ENCODE measurements at regions of chr2 and their contacts with region 1.

Region 1: DNA sequence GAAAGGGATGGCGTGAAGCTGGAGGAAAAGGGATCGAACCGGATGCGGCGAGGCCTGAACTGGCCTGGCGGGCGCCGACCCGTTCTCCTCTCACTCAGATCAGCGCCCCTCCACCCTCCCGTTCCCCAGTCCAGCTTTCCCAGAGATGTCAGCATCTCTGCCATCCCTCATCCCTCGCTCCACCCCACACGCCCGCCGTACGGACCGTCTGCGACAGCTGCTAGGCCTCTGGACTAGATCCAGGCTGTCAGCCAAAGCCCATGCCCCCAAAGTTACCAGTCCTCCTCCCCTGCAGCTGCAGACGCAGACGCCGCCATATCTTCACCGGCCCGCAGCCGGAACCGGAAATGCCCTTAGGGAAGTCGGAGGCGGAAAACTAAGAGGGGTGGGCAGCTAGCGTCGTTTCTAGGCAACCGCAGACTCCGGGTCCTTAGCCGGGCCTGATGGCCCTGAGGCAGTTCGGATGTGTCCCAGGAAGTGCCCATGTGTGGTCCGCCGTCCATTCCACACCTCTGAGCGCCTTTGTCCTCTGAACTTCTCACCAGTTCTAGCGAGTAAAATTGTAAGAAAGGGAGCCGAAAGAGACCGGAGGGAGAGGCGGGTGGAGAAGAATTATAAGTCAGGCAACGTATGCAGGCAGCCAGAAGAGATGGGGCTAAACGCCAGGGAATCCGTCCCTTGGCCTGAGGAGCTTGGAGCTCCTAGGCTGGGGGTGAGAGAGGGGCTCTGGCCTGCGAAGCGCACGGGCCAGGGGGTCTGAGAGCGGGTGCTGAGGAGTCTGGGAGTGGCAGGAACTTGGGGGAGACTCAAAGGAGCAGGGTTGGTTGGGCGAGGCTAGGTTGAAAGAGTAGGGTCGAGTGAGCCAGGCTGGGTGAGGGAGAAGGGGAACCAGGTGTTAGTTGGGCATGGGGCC is at the starts of genes RNF25 and STK36:
- DNase-seq: peak; percentile 91
- ATAC-seq: peak; percentile 91
- H3K4me3 ChIP-seq: peak within 1 kb of the TSS; percentile 81
- H3K27ac ChIP-seq: peak within 1 kb of the TSS; percentile 47
- H3K4me1 ChIP-seq: peaks cover 12% of the 10 kb centered on the region
- H3K27me3 ChIP-seq: no peaks in the 10 kb centered on the region
- CTCF ChIP-seq: no peak
- total RNA-seq, gene RNF25: 35.1 and 42.4 TPM in 2 replicates
- total RNA-seq, gene STK36: 32.9 and 48.2 TPM in 2 replicates

Region 2: DNA sequence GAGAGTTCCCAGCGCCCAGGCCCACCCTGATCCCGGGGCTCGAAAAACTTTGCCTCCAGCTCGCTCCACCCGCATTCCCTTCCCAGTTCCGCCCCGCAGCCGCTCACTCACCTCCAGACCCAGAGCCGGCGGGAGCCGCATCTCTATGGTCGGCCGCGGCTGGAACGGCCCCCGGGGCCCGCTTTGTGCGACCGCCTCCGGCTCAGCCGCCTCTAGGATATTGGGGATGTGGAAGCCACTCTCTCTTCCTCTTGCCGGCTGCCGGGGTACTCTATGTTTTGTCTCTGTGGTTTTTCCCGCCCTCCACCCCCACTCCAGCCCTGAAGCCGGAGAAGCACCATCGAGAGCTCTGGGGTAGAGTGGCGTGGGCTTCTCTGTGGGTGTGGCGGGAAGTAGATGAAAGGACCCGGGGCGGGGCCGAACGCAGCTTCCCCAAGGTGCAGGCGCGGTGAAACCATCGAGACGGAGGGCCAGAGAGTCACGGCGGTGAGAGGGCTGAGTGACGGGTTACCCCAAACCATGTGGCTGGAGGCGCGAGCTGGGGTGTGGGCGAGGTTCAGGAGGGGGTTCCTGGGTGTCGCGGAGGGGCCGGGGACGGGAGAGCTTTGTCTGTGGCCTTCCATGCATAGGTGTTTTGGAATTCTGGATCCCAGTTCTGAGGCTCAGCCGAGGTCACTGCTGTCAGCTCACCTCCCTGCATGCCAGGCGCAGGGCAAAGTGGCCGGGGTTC is 12.5 kb before region 1 on chr2 and contains the starts of genes BCS1L and ZNF142:
- CTCF ChIA-PET with region 1: interaction called, 4 read pairs
- POLR2A ChIA-PET with region 1: interaction called, 36 read pairs
- intact Hi-C with region 1: loop called (anchors 1 kb)
- DNase-seq: peak; percentile 91
- ATAC-seq: peak; percentile 92
- H3K4me3 ChIP-seq: peak within 1 kb of the TSS; percentile 100
- H3K27ac ChIP-seq: peak within 1 kb of the TSS; percentile 61
- H3K4me1 ChIP-seq: peaks cover 20% of the 10 kb centered on the region
- H3K27me3 ChIP-seq: no peaks in the 10 kb centered on the region
- CTCF ChIP-seq: no peak
- total RNA-seq, gene BCS1L: 41.3 and 48.5 TPM in 2 replicates
- total RNA-seq, gene ZNF142: 35.5 and 36.3 TPM in 2 replicates

Region 3: DNA sequence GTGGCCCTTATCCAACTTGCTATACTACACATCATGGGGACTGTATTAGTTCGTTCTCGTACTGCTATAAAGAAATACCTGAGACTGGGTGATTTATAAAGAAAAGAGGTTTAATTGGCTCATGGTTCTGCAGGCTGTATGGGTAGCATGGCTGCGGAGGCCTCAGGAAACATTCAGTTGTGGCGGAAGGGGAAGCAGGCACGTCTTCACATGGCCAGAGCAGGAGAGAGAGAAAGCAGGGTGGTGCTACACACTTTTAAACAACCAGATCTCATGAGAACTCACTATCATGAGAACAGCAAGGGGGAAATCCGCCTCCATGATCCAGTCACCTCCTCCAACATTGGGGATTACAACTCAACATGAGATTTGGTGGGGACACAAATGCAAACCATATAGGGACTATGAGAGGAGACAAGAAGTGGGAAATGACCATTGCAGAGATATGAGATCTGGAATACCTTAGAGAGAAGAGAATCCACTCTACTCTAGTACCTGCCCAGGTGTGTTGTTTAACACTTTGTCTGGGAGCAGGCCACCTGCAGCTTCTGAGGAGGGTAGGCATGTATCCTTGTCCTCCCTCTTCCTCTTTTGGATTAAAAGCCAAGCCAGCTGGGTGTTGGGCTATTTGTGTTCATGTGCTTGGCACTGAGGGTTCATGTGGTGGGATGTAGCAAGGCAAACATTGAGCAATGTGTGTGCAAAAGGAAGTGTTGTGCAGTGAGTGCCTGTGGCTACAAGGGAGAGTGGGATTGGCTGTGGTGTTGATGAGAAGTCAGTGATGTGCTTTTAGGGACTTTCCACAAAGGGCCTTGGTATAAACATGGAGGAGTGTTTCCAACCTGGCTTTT is 61.5 kb after region 1 on chr2:
- CTCF ChIA-PET with region 1: no interaction called
- POLR2A ChIA-PET with region 1: no interaction called
- intact Hi-C with region 1: no loop called
- DNase-seq: peak; percentile 49
- ATAC-seq: no peak
- H3K4me3 ChIP-seq: no peak overlapping the region
- H3K27ac ChIP-seq: peak overlapping the region; percentile 32
- H3K4me1 ChIP-seq: peaks cover 38% of the 10 kb centered on the region
- H3K27me3 ChIP-seq: no peaks in the 10 kb centered on the region
- CTCF ChIP-seq: no peak